ENCODE measurements at regions of chr10 and their contacts with region 1.

Region 1: DNA sequence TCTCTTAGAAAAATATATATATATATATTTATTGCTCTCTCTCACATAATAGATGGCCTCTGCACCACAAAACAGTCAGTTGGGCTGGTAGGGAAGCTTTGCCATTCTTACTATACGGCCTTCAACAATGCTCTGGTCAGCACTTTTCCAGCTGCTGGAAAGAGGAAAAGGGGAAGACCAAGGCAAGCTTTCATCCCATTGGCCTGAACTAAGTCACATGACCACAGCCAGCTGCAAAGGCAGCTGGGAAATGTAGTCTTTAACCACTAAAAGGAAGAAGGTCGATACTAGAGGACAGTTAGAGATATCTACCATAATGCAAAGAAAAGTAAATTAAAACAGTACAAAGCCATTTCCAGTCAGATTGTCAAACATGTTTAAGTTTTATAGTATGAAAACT is 58.4 kb upstream of the MACROH2A2 start:
- DNase-seq: peak; percentile 67 to 91 (median 88)
- ATAC-seq: peak; percentile 98
- H3K4me3 ChIP-seq: no peak overlapping the region
- H3K27ac ChIP-seq: no peak overlapping the region
- H3K4me1 ChIP-seq: no peaks in the 10 kb centered on the region
- H3K27me3 ChIP-seq: no peaks in the 10 kb centered on the region; a peak in 1 of 5 replicates
- CTCF ChIP-seq: no peak
- EP300 ChIP-seq: no peak
- POLR2A ChIP-seq: no peak
- RAD21 ChIP-seq: no peak

Region 2: GRCh38 chr10:70007116-70007820 is 13.0 kb after region 1 on chr10:
- CTCF ChIA-PET with region 1: no interaction called
- POLR2A ChIA-PET with region 1: no interaction called
- in situ Hi-C with region 1: no loop called
- intact Hi-C with region 1: loop called (anchors 2 kb)
- DNase-seq: no peak
- ATAC-seq: no peak
- H3K4me3 ChIP-seq: no peak overlapping the region
- H3K27ac ChIP-seq: no peak overlapping the region
- H3K4me1 ChIP-seq: no peaks in the 10 kb centered on the region
- H3K27me3 ChIP-seq: peaks cover 2 to 8% of the 10 kb centered on the region in 2 experiments; a peak in 3 of 5 replicates
- CTCF ChIP-seq: no peak
- EP300 ChIP-seq: no peak
- POLR2A ChIP-seq: no peak
- RAD21 ChIP-seq: no peak